ENCODE measurements at regions of chr5 and their contacts with region 1.

Region 1: GRCh38 chr5:10283927-10284635 is 23.6 kb downstream of the CMBL start:
- DNase-seq: peak; percentile 87 to 94
- ATAC-seq: peak; percentile 89
- H3K4me3 ChIP-seq: no peak overlapping the region
- H3K27ac ChIP-seq: no peak overlapping the region
- H3K4me1 ChIP-seq: no peaks in the 10 kb centered on the region
- H3K27me3 ChIP-seq: no peaks in the 10 kb centered on the region

Region 2: DNA sequence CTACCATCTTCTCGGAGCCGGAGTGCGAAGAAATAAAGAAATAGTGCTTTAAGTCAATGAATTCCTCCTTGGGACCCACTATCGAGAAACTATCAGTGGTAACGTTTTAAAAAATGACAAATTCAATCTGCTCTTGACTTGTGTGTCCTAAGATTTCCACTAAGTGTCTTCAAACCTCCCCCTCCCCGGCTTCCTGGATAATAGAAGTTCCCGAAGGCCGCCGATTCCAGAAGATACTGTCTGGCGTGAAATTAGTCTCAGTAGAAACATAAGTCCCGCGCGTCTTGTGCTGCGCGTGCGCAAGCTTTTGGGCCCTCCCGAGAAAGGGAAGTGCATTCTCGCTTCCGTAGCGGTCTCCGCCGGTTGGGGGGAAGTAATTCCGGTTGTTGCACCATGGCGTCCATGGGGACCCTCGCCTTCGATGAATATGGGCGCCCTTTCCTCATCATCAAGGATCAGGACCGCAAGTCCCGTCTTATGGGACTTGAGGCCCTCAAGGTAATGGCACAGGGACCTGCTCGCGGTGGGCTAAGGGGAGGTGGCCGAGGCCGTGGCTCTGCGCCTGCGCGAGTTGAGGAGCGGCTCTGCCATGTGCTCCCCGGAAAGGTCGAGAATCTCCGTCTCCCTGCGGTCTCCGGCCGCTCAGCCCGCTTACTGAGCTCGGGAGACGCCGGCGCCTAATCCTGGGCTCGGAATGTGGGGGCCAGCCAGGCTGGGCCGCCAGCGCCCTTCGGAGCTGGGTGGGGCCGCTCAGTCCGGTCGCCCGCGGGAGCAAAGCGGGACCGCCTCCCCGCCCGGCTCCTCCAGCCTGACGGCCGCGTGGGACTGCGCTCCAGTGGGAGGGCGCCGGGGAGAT is 33.9 kb before region 1 on chr5 and contains the start of gene CCT5:
- intact Hi-C with region 1: no loop called
- DNase-seq: peak; percentile 96
- ATAC-seq: peak; percentile 96
- H3K4me3 ChIP-seq: peak within 1 kb of the TSS; percentile 78 to 85
- H3K27ac ChIP-seq: peak within 1 kb of the TSS; percentile 32 to 78
- H3K4me1 ChIP-seq: peaks cover 0 to 7% of the 10 kb centered on the region in 2 donors
- H3K27me3 ChIP-seq: no peaks in the 10 kb centered on the region
- total RNA-seq, gene CCT5: 84.4 to 104 TPM

Region 3: GRCh38 chr5:10401498-10401897 is 117.4 kb after region 1 on chr5:
- intact Hi-C with region 1: loop called in 1 of 2 experiments (anchors 5 kb)
- DNase-seq: no peak
- ATAC-seq: no peak
- H3K4me3 ChIP-seq: no peak overlapping the region
- H3K27ac ChIP-seq: peak overlapping the region in 1 of 2 donors; percentile 57
- H3K4me1 ChIP-seq: no peaks in the 10 kb centered on the region
- H3K27me3 ChIP-seq: no peaks in the 10 kb centered on the region

Region 4: DNA sequence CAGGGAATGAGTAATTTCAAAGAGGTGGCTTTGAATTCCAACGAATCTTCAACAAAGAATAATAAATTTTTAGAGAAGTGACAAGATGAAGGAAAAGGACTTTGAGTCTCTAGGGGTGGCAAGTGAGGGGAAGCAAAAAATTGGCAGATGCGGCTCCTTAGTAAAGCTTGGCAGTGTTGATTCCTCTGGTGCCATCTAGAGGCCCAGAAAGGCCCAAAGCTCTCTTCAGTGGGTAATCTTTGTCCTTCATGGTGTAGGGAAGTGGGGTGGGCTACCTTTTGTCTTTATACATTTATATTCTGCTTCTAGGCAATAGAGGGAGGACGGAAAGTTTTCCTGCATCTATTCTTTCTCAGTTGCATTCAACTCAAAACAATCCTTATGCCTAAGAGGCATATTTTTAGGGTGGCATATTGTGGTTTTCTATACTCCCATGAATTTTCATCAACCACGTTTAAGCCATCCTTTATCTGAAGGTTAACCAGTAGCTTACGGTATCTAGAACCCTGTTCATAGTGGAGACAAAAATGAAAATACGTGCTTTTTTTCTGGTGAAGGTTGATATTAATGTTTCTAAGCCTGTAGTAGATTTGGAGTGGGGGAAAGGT is 140.1 kb after region 1 on chr5:
- intact Hi-C with region 1: loop called (anchors 5 kb)
- DNase-seq: no peak
- ATAC-seq: no peak
- H3K4me3 ChIP-seq: no peak overlapping the region
- H3K27ac ChIP-seq: no peak overlapping the region
- H3K4me1 ChIP-seq: peaks cover 0 to 3% of the 10 kb centered on the region in 2 donors
- H3K27me3 ChIP-seq: no peaks in the 10 kb centered on the region

Region 5: GRCh38 chr5:10627160-10627701 is 343.1 kb after region 1 on chr5:
- intact Hi-C with region 1: loop called (anchors 5 to 10 kb)
- DNase-seq: no peak
- ATAC-seq: peak; percentile 9
- H3K4me3 ChIP-seq: peak overlapping the region in 1 of 2 donors; percentile 15
- H3K27ac ChIP-seq: peak overlapping the region; percentile 2 to 46
- H3K4me1 ChIP-seq: no peaks in the 10 kb centered on the region
- H3K27me3 ChIP-seq: no peaks in the 10 kb centered on the region